Activated CD4-positive, alpha-beta memory T cell treated with anti-CD3 and anti-CD28 coated beads for 36 hours (primary cell): ENCODE measurements at regions of chr6 and their contacts with region 1.

Region 1: GRCh38 chr6:152552616-152553209 is 84.4 kb downstream of the SYNE1 start:
- DNase-seq: peak; percentile 43
- H3K4me3 Mint-ChIP-seq: no peak overlapping the region
- H3K27ac Mint-ChIP-seq: no peak overlapping the region
- H3K4me1 Mint-ChIP-seq: no peaks in the 10 kb centered on the region
- H3K27me3 Mint-ChIP-seq: peaks cover 6% of the 10 kb centered on the region

Region 2: DNA sequence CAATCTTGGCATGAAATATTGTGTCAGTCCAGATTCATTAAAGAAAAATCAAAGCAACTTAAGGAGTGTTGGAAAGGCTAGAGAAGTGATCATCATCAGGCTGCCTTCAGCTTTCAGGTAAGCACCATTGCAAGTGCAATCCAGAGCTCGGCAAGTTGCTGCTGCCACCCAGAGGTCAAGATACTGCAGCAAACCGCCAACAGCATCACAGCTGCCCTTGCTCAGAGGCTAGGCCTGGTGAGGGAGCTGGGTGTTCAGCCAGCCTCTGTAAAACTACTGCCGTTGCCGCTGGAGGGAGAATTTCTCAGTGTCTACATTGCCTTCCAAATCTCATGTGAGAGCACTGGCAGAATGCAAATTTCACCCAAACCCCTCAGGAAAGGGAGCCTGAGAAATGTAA is 90.3 kb after region 1 on chr6:
- CTCF ChIA-PET with region 1: interaction called, 14 read pairs
- POLR2A ChIA-PET with region 1: no interaction called
- intact Hi-C with region 1: loop called (anchors 2 kb)
- DNase-seq: peak; percentile 48
- H3K4me3 Mint-ChIP-seq: no peak overlapping the region
- H3K27ac Mint-ChIP-seq: no peak overlapping the region
- H3K4me1 Mint-ChIP-seq: no peaks in the 10 kb centered on the region
- H3K27me3 Mint-ChIP-seq: peaks cover 9% of the 10 kb centered on the region

Region 3: GRCh38 chr6:152948150-152948768 is 395.5 kb after region 1 on chr6:
- CTCF ChIA-PET with region 1: interaction called, 3 read pairs
- POLR2A ChIA-PET with region 1: no interaction called
- intact Hi-C with region 1: loop called (anchors 2 kb)
- DNase-seq: no peak
- H3K4me3 Mint-ChIP-seq: no peak overlapping the region
- H3K27ac Mint-ChIP-seq: no peak overlapping the region
- H3K4me1 Mint-ChIP-seq: peaks cover 2% of the 10 kb centered on the region
- H3K27me3 Mint-ChIP-seq: peaks cover 12% of the 10 kb centered on the region